Vagina (tissue), 2 donors: ENCODE measurements at regions of chr17 and their contacts with region 1.

Region 1: GRCh38 chr17:75691801-75692626 is 24.9 kb downstream of the SAP30BP start:
- DNase-seq: peak in 1 of 2 donors; percentile 82
- H3K4me3 ChIP-seq: no peak overlapping the region
- H3K27ac ChIP-seq: peak overlapping the region; percentile 72
- H3K4me1 ChIP-seq: peaks cover 89% of the 10 kb centered on the region
- H3K27me3 ChIP-seq: no peaks in the 10 kb centered on the region
- CTCF ChIP-seq: no peak
- POLR2A ChIP-seq: no peak

Region 2: GRCh38 chr17:75667021-75667790 is 24.8 kb before region 1 on chr17 and contains the starts of genes RECQL5 and SAP30BP:
- intact Hi-C with region 1: no loop called
- DNase-seq: peak; percentile 98
- H3K4me3 ChIP-seq: peak within 1 kb of the TSS; percentile 90 to 96
- H3K27ac ChIP-seq: peak within 1 kb of the TSS; percentile 87
- H3K4me1 ChIP-seq: peaks cover 24% of the 10 kb centered on the region
- H3K27me3 ChIP-seq: no peaks in the 10 kb centered on the region
- CTCF ChIP-seq: no peak
- POLR2A ChIP-seq: peak in 1 of 2 donors; percentile 36
- total RNA-seq, gene RECQL5: 44.0 TPM
- total RNA-seq, gene SAP30BP: 79.1 TPM

Region 3: DNA sequence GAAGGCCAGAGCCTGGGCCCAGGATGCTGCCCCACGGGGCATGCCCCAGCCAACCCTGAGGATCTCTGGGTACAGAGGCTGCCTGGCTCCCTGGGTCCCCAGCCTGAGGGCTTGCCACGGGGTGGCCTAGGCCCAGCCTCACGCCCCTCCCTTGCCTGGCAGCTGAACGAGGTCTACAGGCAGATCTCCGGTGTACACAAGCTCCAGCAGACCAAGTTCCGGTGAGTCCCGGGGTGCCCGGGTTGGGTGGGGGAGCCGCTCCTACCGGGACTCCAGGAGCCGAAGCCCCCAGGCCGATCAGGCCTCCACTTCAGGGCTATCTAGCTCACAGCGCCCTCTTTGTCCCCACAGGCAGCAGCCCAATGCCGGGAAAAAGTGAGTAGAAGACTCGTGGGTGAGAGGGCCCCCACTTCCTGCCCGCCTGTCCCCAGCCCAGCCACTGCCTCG is 48.6 kb after region 1 on chr17:
- intact Hi-C with region 1: loop called (anchors 1 kb)
- DNase-seq: no peak
- H3K4me3 ChIP-seq: no peak overlapping the region
- H3K27ac ChIP-seq: no peak overlapping the region
- H3K4me1 ChIP-seq: no peaks in the 10 kb centered on the region
- H3K27me3 ChIP-seq: no peaks in the 10 kb centered on the region
- CTCF ChIP-seq: no peak
- POLR2A ChIP-seq: no peak